HCT116 (cell line): ENCODE measurements at regions of chr6 and their contacts with region 1.

Region 1: DNA sequence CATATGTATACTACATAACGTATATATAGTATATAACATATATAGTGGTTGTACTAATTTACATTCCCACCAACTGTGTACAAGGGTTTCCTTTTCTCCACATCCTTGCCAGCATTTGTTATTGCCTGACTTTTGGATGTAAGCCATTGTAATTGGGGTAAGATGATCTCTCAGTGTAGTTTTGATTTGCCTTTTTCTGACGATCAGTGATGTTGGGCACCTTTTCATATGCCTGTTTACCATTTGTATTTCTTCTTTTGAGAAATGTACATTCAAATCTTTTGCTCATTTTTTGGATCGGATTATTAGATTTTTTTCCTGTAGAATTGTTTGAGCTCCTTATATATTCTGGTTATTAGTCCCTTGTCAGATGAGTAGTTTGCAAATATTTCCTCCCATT is 11.4 kb downstream of the SYNJ2 start:
- DNase-seq: no peak
- ATAC-seq: no peak
- H3K4me3 ChIP-seq: no peak overlapping the region
- H3K27ac ChIP-seq: no peak overlapping the region
- H3K4me1 ChIP-seq: peaks cover 51 to 62% of the 10 kb centered on the region in 2 experiments
- H3K27me3 ChIP-seq: no peaks in the 10 kb centered on the region
- CTCF ChIP-seq: no peak
- POLR2A ChIP-seq: no peak
- RAD21 ChIP-seq: no peak

Region 2: GRCh38 chr6:157592525-157592924 is 400.6 kb before region 1 on chr6:
- CTCF ChIA-PET with region 1: no interaction called
- POLR2A ChIA-PET with region 1: no interaction called
- RAD21 ChIA-PET with region 1: no interaction called
- intact Hi-C with region 1: no loop called
- DNase-seq: no peak
- ATAC-seq: peak; percentile 71
- H3K4me3 ChIP-seq: no peak overlapping the region
- H3K27ac ChIP-seq: no peak overlapping the region
- H3K4me1 ChIP-seq: no peaks in the 10 kb centered on the region
- H3K27me3 ChIP-seq: no peaks in the 10 kb centered on the region
- CTCF ChIP-seq: no peak
- POLR2A ChIP-seq: no peak
- RAD21 ChIP-seq: no peak

Region 3: GRCh38 chr6:157954150-157955117 is 38.6 kb before region 1 on chr6:
- CTCF ChIA-PET with region 1: no interaction called
- POLR2A ChIA-PET with region 1: no interaction called
- RAD21 ChIA-PET with region 1: no interaction called
- intact Hi-C with region 1: no loop called
- DNase-seq: no peak
- ATAC-seq: peak; percentile 85
- H3K4me3 ChIP-seq: peak overlapping the region; percentile 17 to 42
- H3K27ac ChIP-seq: no peak overlapping the region
- H3K4me1 ChIP-seq: peaks cover 12 to 30% of the 10 kb centered on the region in 2 experiments; a peak in 3 of 4 replicates
- H3K27me3 ChIP-seq: no peaks in the 10 kb centered on the region
- CTCF ChIP-seq: peak in 2 of 3 experiments; percentile 22 to 48; a peak in 1 of 6 replicates
- POLR2A ChIP-seq: no peak
- RAD21 ChIP-seq: peak; percentile 73

Region 4: GRCh38 chr6:158031381-158032353 is 38.6 kb after region 1 on chr6:
- CTCF ChIA-PET with region 1: no interaction called
- POLR2A ChIA-PET with region 1: interaction called, 10 read pairs
- RAD21 ChIA-PET with region 1: no interaction called
- intact Hi-C with region 1: no loop called
- DNase-seq: peak; percentile 54
- ATAC-seq: peak; percentile 78
- H3K4me3 ChIP-seq: peak overlapping the region in 1 of 2 experiments; percentile 23; a peak in 2 of 4 replicates
- H3K27ac ChIP-seq: peak overlapping the region; percentile 68
- H3K4me1 ChIP-seq: peaks cover 30 to 46% of the 10 kb centered on the region in 2 experiments
- H3K27me3 ChIP-seq: no peaks in the 10 kb centered on the region
- CTCF ChIP-seq: no peak
- POLR2A ChIP-seq: no peak
- RAD21 ChIP-seq: 0 out of 2 replicates have a peak, but pooled peaks have one; percentile 35

Region 5: DNA sequence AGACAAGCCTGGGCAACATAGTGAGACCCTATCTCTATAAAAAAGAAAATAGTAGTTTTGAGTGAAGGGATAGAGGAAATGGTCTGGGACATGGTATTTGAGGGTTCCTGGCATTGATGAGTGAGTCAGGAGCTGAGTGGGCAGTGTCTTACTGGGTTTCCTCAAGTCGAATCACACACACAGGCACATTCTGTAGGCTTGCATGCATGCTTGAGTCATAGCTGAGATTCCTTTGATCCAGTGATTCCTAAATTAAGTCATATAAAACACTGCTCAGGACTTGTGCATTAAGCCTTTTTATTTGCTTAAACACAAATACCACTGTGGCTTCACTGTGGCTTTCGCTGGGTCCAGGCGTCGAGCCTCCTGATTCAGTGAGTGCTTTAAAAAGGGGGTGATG is 495.0 kb after region 1 on chr6:
- CTCF ChIA-PET with region 1: no interaction called
- POLR2A ChIA-PET with region 1: no interaction called
- RAD21 ChIA-PET with region 1: no interaction called
- intact Hi-C with region 1: no loop called
- DNase-seq: peak; percentile 63
- ATAC-seq: peak; percentile 93
- H3K4me3 ChIP-seq: no peak overlapping the region
- H3K27ac ChIP-seq: peak overlapping the region; percentile 24; the same call in 1 of the 2 replicates
- H3K4me1 ChIP-seq: peaks cover 8 to 18% of the 10 kb centered on the region in 2 experiments; a peak in 3 of 4 replicates
- H3K27me3 ChIP-seq: no peaks in the 10 kb centered on the region
- CTCF ChIP-seq: no peak
- POLR2A ChIP-seq: no peak
- RAD21 ChIP-seq: no peak